ENCODE measurements at regions of chr13 and their contacts with region 1.

Region 1: DNA sequence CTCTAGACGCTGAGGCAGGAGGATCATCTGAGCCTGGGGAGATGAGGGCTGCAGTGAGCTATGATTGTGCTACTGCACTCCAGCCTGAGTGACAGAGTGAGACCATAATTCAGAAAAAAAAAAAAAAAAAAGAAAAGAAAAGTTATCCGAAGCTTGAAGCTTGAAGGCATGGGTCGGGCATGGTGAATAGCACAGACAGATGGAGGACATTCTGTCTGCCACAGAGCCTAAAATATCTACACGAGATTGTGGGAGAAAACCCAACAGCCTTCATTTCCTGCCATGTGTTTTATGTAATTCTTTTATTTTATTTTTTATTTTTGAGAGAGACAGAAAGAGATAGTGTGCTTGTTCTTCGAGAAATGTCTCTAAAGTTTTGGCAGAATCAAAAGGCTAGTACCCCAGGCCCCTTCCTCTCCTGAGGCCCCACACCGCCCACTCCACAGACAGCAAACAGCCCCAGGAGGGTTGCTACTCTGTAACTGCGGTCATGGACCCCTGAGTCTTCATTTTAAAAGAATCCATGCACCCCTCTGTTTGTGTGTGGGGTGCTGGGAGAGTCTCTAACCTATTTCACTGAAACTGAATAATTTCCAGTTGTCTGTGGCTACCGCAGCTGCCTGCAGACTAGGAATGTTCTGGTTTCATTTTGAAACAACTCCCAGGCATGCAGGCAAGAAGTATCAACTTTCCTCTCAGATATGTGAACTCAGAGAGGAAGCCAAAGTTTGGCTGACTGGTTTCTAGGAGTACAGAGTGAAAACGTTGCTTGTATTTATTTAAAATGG is 38.4 kb upstream of the RCBTB2 start:
- DNase-seq: peak in 1 of 3 donors; percentile 19
- H3K4me3 ChIP-seq: peak overlapping the region in 1 of 3 experiments; percentile 38
- H3K4me3 Mint-ChIP-seq: no peak overlapping the region
- H3K27ac ChIP-seq: peak overlapping the region; percentile 89 to 96
- H3K27ac Mint-ChIP-seq: peak overlapping the region; percentile 54 to 100 (median 96)
- H3K4me1 ChIP-seq: peaks cover 98 to 100% of the 10 kb centered on the region in 2 donors
- H3K4me1 Mint-ChIP-seq: peaks cover 92% of the 10 kb centered on the region
- H3K27me3 ChIP-seq: no peaks in the 10 kb centered on the region
- H3K27me3 Mint-ChIP-seq: no peaks in the 10 kb centered on the region
- CTCF ChIP-seq: no peak

Region 2: DNA sequence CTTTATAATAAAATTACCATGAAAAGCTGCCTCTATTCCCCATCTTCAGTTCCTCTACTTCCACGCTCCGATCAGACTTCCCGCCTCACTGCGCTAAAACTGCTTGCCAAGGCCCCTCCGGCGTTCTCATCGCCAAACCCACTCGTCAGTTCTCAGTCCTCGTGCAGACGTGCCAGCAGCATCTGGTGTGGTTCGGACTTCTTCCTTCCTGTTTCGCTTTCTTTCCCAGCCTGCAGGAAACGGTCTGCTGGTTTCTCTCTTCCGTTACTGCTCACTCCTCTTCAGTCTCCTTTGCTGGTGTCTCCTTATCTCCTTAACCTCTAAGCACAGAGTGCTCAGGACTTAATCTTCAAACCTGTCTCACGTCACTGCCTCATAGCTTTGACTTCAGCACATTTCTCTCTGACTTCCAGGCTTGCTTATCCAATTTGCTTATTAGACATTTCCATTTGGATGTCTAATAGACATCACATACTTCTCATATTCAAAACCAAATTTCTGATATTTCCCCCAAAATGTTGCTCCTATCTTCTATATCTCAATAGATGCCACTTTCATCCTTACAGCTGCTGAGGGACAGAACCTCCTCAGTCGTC is 78.8 kb before region 1 on chr13:
- intact Hi-C with region 1: loop called (anchors 5 kb)
- DNase-seq: peak; percentile 84 to 91 (median 90)
- H3K4me3 ChIP-seq: peak overlapping the region; percentile 34 to 69 (median 36)
- H3K4me3 Mint-ChIP-seq: no peak overlapping the region
- H3K27ac ChIP-seq: peak overlapping the region; percentile 91 to 92
- H3K27ac Mint-ChIP-seq: no peak overlapping the region
- H3K4me1 ChIP-seq: peaks cover 62 to 77% of the 10 kb centered on the region in 2 donors
- H3K4me1 Mint-ChIP-seq: peaks cover 45% of the 10 kb centered on the region
- H3K27me3 ChIP-seq: no peaks in the 10 kb centered on the region
- H3K27me3 Mint-ChIP-seq: no peaks in the 10 kb centered on the region
- CTCF ChIP-seq: no peak